Natural killer cell (primary cell): ENCODE measurements at regions of chr19 and their contacts with region 1.

Region 1: GRCh38 chr19:46542428-46543230 is 47.0 kb upstream of the PNMA8B start:
- DNase-seq: peak; percentile 73 to 88
- ATAC-seq: peak; percentile 72 to 79 (median 74)
- H3K4me3 ChIP-seq: no peak overlapping the region
- H3K4me3 Mint-ChIP-seq: no peak overlapping the region
- H3K27ac ChIP-seq: no peak overlapping the region
- H3K27ac Mint-ChIP-seq: no peak overlapping the region
- H3K4me1 ChIP-seq: no peaks in the 10 kb centered on the region
- H3K4me1 Mint-ChIP-seq: peaks cover 1 to 9% of the 10 kb centered on the region in 2 donors
- H3K27me3 ChIP-seq: no peaks in the 10 kb centered on the region
- H3K27me3 Mint-ChIP-seq: peaks cover 5 to 12% of the 10 kb centered on the region in 2 donors
- CTCF ChIP-seq: peak; percentile 99

Region 2: GRCh38 chr19:46529622-46530462 is 12.8 kb before region 1 on chr19:
- intact Hi-C with region 1: loop called (anchors 1 kb)
- DNase-seq: peak; percentile 67 to 89
- ATAC-seq: peak; percentile 59 to 78 (median 70)
- H3K4me3 ChIP-seq: no peak overlapping the region
- H3K4me3 Mint-ChIP-seq: no peak overlapping the region
- H3K27ac ChIP-seq: no peak overlapping the region
- H3K27ac Mint-ChIP-seq: no peak overlapping the region
- H3K4me1 ChIP-seq: peaks cover 21% of the 10 kb centered on the region
- H3K4me1 Mint-ChIP-seq: peaks cover 9 to 12% of the 10 kb centered on the region in 2 donors
- H3K27me3 ChIP-seq: no peaks in the 10 kb centered on the region
- H3K27me3 Mint-ChIP-seq: peaks cover 7 to 10% of the 10 kb centered on the region in 2 donors
- CTCF ChIP-seq: peak; percentile 91